AG04450 (cell line): ENCODE measurements at regions of chr19 and their contacts with region 1.

Region 1: GRCh38 chr19:47391510-47392223 is 27.7 kb downstream of the MEIS3 start:
- DNase-seq: peak; percentile 23
- H3K4me3 ChIP-seq: no peak overlapping the region
- H3K27ac ChIP-seq: no peak overlapping the region
- H3K27me3 ChIP-seq: peaks cover 3% of the 10 kb centered on the region
- CTCF ChIP-seq: peak; percentile 93

Region 2: GRCh38 chr19:47284324-47284899 is 107.3 kb before region 1 on chr19:
- CTCF ChIA-PET with region 1: interaction called, 38 read pairs
- POLR2A ChIA-PET with region 1: interaction called, 3 read pairs
- DNase-seq: peak; percentile 33
- H3K4me3 ChIP-seq: no peak overlapping the region
- H3K27ac ChIP-seq: no peak overlapping the region
- H3K27me3 ChIP-seq: no peaks in the 10 kb centered on the region
- CTCF ChIP-seq: peak; percentile 83

Region 3: GRCh38 chr19:47296036-47296435 is 95.6 kb before region 1 on chr19:
- CTCF ChIA-PET with region 1: interaction called, 121 read pairs
- POLR2A ChIA-PET with region 1: interaction called, 3 read pairs
- DNase-seq: peak; percentile 50
- H3K4me3 ChIP-seq: no peak overlapping the region
- H3K27ac ChIP-seq: no peak overlapping the region
- H3K27me3 ChIP-seq: no peaks in the 10 kb centered on the region
- CTCF ChIP-seq: peak; percentile 76

Region 4: GRCh38 chr19:47305309-47305751 is 86.3 kb before region 1 on chr19:
- CTCF ChIA-PET with region 1: interaction called, 16 read pairs
- POLR2A ChIA-PET with region 1: no interaction called
- DNase-seq: peak; percentile 78
- H3K4me3 ChIP-seq: peak overlapping the region; percentile 27
- H3K27ac ChIP-seq: peak overlapping the region; percentile 21
- H3K27me3 ChIP-seq: no peaks in the 10 kb centered on the region
- CTCF ChIP-seq: peak; percentile 98

Region 5: DNA sequence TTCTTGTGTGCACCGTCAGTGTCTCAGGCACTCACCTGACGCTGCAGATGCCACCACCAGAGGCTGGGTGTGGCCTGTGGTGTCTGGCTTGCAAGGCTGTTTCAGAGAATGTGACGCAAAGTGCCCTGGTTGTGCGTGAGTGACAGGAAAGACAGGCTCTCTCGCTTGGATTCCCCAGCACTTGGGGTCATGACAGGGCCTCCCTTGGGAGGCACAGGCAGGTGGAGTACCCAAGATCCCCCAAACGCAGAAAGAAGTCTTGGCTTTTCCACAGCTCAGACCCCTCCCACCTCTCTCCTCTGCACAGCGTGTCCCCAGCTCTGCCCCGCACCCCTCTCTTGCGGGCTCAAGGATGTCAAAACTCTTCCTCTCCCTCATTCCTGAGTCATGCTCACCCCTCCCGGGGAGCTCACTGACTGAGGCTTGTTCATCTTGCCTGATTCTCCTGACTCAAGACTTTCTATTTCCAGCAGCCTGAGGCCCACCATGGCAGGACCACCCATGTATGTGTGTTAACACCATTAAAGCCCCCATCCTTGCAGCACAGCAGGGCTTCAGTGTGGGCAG is 21.5 kb before region 1 on chr19:
- CTCF ChIA-PET with region 1: interaction called, 17 read pairs
- POLR2A ChIA-PET with region 1: no interaction called
- DNase-seq: peak; percentile 23
- H3K4me3 ChIP-seq: no peak overlapping the region
- H3K27ac ChIP-seq: peak overlapping the region; percentile 52
- H3K27me3 ChIP-seq: no peaks in the 10 kb centered on the region
- CTCF ChIP-seq: no peak

Region 6: DNA sequence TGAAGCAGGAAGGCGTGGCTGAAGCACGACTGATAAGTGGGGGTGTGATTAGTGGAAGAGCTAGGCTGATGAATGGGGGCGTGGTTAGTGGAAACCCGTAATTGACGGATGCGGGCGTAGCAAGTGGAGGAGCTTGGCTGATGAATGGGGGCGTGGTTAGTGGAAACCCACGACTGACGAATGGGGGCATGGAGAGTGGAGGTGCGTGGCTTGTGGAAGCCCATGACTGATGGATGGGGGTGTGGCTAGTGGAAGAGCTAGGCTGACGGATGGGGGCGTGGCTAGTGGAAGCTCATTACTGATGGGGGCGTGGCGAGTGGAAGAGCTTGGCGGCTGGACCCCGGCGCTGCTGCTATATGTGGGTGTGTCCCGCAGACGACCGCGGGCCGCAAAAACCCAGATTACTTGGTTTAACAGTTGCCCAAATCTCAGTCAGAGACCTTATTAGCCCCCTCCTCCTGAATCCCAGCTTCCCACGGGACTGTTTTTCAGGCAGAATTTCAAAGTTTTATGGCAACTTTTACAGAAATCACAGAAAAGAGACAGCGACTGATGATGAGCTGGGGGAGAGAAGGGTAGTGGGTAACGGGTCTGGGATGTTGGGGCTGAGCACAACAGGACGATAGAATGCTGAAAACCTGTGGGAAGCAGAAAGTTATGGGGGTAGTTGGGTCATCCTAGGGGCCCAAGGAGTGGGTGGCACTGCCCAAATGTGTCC is 36.7 kb after region 1 on chr19:
- CTCF ChIA-PET with region 1: interaction called, 10 read pairs
- POLR2A ChIA-PET with region 1: no interaction called
- DNase-seq: peak; percentile 92
- H3K4me3 ChIP-seq: peak overlapping the region; percentile 50
- H3K27ac ChIP-seq: peak overlapping the region; percentile 11
- H3K27me3 ChIP-seq: peaks cover 10% of the 10 kb centered on the region
- CTCF ChIP-seq: no peak